ENCODE measurements at regions of chr16 and their contacts with region 1.

Region 1: GRCh38 chr16:88437373-88437964 is 15.6 kb upstream of the ZFPM1 start:
- DNase-seq: peak in 6 of 10 donors; percentile 45 to 91 (median 56)

Region 2: GRCh38 chr16:87950765-87951549 is 486.5 kb before region 1 on chr16 and contains the start of gene BANP:
- intact Hi-C with region 1: loop called (anchors 10 kb)
- DNase-seq: peak; percentile 95 to 100 (median 98)

Region 3: GRCh38 chr16:88194397-88195268 is 242.8 kb before region 1 on chr16:
- intact Hi-C with region 1: loop called (anchors 5 kb)
- DNase-seq: peak in 1 of 10 donors; percentile 83

Region 4: GRCh38 chr16:88331989-88332920 is 105.2 kb before region 1 on chr16:
- intact Hi-C with region 1: no loop called
- DNase-seq: peak in 3 of 10 donors; percentile 10 to 73 (median 68)

Measured in posterior cingulate gyrus (tissue), 11 donors.